Breast epithelium (tissue), 4 donors: ENCODE measurements at regions of chr5 and their contacts with region 1.

Region 1: GRCh38 chr5:27797220-27797619 is 758.8 kb upstream of the CDH9 start:
- DNase-seq: no peak
- H3K4me3 ChIP-seq: no peak overlapping the region
- H3K27ac ChIP-seq: no peak overlapping the region
- H3K4me1 ChIP-seq: no peaks in the 10 kb centered on the region
- H3K27me3 ChIP-seq: no peaks in the 10 kb centered on the region
- CTCF ChIP-seq: no peak
- POLR2A ChIP-seq: no peak

Region 2: DNA sequence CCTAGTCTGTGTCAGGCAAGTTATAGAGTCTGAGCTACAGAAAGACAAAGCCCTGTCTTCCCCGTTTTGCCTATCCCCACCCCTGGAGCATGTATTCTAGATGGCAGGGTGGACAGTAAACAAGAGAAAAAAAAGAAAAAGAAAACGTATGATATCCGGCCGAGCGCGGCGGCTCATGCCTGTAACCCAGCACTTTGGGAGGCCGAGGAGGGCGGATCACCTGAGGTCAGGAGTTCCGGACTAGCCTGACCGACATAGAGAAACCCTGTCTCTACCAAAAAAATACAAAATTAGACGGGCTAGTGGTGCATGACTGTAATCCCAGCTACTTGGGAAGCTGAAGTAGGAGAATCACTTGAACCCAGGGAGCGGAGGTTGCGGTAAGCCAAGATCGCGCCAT is 235.8 kb before region 1 on chr5:
- intact Hi-C with region 1: loop called (anchors 5 kb)
- DNase-seq: no peak
- H3K4me3 ChIP-seq: no peak overlapping the region
- H3K27ac ChIP-seq: no peak overlapping the region
- H3K4me1 ChIP-seq: no peaks in the 10 kb centered on the region
- H3K27me3 ChIP-seq: no peaks in the 10 kb centered on the region
- CTCF ChIP-seq: no peak
- POLR2A ChIP-seq: no peak

Region 3: DNA sequence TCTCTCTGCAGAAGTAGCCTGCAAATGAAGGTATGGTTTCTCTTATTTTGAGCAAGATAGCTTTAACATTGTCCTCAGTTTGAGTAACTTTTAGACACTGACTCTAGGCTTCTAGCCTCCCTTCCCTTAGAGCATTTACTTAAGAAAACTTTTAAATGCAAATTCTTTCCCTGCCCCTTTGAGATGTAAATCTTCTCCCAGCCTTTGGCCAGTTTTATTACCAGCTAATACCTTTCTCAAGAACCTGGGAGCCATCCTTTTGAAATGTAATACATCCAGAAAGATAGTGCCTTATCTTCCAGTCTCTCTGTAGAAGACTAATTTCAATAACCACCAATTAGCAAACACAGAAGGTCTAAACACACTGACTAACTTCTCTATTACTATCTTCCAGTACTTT is 70.0 kb before region 1 on chr5:
- intact Hi-C with region 1: no loop called
- DNase-seq: no peak
- H3K4me3 ChIP-seq: no peak overlapping the region
- H3K27ac ChIP-seq: no peak overlapping the region
- H3K4me1 ChIP-seq: no peaks in the 10 kb centered on the region
- H3K27me3 ChIP-seq: no peaks in the 10 kb centered on the region
- CTCF ChIP-seq: no peak
- POLR2A ChIP-seq: no peak

Region 4: GRCh38 chr5:29518176-29518575 is 1721.0 kb after region 1 on chr5:
- intact Hi-C with region 1: no loop called
- DNase-seq: no peak
- H3K4me3 ChIP-seq: no peak overlapping the region
- H3K27ac ChIP-seq: no peak overlapping the region
- H3K4me1 ChIP-seq: no peaks in the 10 kb centered on the region
- H3K27me3 ChIP-seq: no peaks in the 10 kb centered on the region
- CTCF ChIP-seq: no peak
- POLR2A ChIP-seq: no peak